Ovary (tissue), 10 donors: ENCODE measurements at regions of chrX and their contacts with region 1.

Region 1: GRCh38 chrX:2484721-2485648 is 15.8 kb downstream of the DHRSX start:
- DNase-seq: peak; percentile 50 to 73 (median 56)
- H3K4me3 ChIP-seq: peak overlapping the region; percentile 20
- H3K27ac ChIP-seq: peak overlapping the region; percentile 57 to 68
- H3K4me1 ChIP-seq: peaks cover 5% of the 10 kb centered on the region
- H3K27me3 ChIP-seq: no peaks in the 10 kb centered on the region
- CTCF ChIP-seq: no peak
- EP300 ChIP-seq: no peak
- POLR2A ChIP-seq: no peak

Region 2: GRCh38 chrX:2325076-2325784 is 159.8 kb before region 1 on chrX:
- intact Hi-C with region 1: loop called in 1 of 4 experiments (anchors 10 kb)
- DNase-seq: peak; percentile 81 to 91 (median 87)
- H3K4me3 ChIP-seq: peak overlapping the region; percentile 49
- H3K27ac ChIP-seq: peak overlapping the region in 1 of 2 donors; percentile 83
- H3K4me1 ChIP-seq: no peaks in the 10 kb centered on the region
- H3K27me3 ChIP-seq: no peaks in the 10 kb centered on the region
- CTCF ChIP-seq: no peak
- EP300 ChIP-seq: no peak
- POLR2A ChIP-seq: no peak